SK-MEL-5 (cell line): ENCODE measurements at regions of chr1 and their contacts with region 1.

Region 1: DNA sequence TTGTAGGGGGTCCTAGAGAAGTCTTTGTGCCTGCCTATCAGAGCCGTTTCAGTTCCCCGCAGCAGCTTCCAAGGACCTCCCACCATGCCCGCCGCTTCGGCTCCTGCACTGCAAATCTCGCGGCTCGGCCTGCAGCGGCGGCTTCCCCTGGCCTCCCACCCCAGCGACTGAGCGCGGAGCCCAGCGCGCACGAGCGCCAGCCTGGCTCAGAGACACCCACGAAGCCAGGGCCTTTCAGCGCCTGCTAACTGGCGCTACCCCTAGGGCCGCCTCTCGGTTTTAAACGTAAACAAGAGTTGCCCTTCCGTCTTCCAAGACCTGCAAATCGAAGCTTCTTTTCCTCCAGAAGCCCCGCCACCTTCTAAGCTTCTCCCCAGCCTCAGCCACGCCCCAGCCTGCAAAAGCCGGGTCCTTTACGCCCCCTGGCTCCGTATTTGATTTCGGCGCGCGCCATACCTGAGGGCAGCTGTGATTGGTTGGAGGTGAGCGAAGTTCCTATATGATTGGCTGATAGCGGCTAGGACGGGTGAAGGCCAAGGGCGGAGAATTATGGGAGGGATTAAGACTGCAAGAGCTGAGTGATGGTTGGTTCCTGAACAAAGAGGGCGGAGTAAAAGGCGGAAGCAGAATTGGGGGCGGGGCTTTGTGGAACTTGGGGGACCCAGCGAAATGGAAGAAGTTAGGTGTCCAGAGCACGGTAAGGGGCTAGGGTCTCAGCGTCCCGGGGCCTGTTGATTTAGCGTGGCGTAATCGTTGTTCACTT is at the start of gene TTF2:
- DNase-seq: peak; percentile 99
- total RNA-seq, gene TTF2: 63.9 and 76.7 TPM in 2 replicates

Region 2: DNA sequence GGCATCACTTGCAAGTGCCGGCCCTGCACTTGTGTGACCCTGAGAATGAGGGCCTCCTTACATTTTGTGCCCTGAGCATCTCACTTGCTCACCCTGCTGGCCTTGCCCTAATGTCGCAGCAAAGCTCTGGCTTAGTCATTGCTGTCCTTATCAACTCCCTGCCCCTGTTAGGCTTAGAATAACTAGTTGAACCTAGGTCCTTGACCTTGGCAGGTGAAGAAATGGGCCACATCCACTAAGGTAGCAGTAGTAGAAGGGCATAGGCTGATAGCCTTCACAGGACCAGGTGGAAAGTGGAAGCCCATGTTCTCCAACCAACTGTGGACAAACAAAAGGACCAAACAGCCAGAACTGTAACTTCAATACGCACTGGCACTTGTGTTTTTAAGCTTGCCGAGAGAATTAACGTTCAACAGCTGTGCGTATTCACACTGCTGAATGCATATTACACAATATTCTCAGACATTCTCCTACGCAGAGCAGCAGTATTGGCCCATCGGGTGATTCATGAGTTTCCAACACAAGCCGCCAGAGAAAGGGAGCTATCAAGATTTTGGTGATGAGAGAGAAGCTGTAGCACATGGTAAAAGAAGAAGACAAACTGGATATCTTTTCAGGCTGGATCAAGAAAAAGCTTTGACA is 177.9 kb before region 1 on chr1:
- in situ Hi-C with region 1: loop called (anchors 25 kb)
- DNase-seq: peak; percentile 49

Region 3: GRCh38 chr1:117284399-117285215 is 224.7 kb after region 1 on chr1:
- in situ Hi-C with region 1: loop called (anchors 25 kb)
- DNase-seq: peak; percentile 89

Region 4: DNA sequence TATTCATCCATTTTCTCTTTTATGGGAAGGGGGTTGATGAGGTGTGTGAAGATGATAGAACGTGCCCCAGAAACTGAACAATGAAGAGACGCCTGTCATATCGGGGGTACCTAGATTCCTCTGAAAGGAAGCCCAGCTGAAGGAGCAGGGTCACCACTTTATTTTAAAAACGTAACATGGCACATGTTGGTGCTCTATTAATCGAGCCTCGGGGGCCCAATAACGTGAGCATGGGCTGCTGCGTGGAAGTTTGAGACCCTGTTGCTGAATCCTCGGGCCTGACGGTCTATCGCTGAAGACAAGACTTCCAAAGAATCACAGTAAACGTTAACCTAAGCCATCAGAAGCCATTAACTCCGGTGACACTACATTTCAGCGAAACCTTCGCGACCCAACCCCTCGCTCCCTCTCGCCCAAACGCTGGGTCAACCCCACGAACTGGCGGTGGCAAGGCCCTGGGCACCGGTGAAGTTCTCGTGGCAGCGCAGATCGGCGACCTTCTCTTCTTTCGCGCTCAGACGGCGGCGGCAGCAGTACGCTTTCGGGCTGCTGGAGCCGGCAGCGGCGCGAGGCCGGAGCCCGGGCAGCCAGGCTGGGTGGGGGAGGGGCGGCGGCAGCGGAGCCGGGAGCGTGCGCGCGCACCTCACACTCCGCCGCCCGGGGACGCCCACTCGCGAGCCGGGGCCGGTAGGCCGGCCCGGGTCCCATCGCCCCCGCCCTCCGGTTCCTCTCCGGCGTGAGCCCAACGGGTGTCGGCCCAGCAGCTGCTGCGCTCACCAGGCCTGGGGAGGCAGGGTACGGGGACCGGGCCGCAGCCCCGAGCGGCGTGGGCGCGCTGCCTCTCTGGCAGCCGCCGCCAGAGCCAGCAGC is 306.6 kb after region 1 on chr1:
- in situ Hi-C with region 1: no loop called
- DNase-seq: peak; percentile 65